Activated B cell treated with CpG ODN at 0.5 μM for 24 hours (primary cell): ENCODE measurements at regions of chr21 and their contacts with region 1.

Region 1: GRCh38 chr21:15128267-15128666 is 63.5 kb upstream of the NRIP1 start:
- DNase-seq: no peak
- ATAC-seq: peak; percentile 68
- H3K4me3 Mint-ChIP-seq: peak overlapping the region; percentile 50
- H3K27ac Mint-ChIP-seq: peak overlapping the region; percentile 48
- H3K4me1 Mint-ChIP-seq: peaks cover 20% of the 10 kb centered on the region
- H3K27me3 Mint-ChIP-seq: peaks cover under 1% of the 10 kb centered on the region
- CTCF ChIP-seq: no peak

Region 2: GRCh38 chr21:14366998-14367397 is 761.3 kb before region 1 on chr21:
- CTCF ChIA-PET with region 1: no interaction called
- POLR2A ChIA-PET with region 1: no interaction called
- intact Hi-C with region 1: no loop called
- DNase-seq: no peak
- ATAC-seq: no peak
- H3K4me3 Mint-ChIP-seq: no peak overlapping the region
- H3K27ac Mint-ChIP-seq: no peak overlapping the region
- H3K4me1 Mint-ChIP-seq: no peaks in the 10 kb centered on the region
- H3K27me3 Mint-ChIP-seq: peaks cover 6% of the 10 kb centered on the region
- CTCF ChIP-seq: no peak

Region 3: GRCh38 chr21:14403681-14404318 is 724.5 kb before region 1 on chr21:
- CTCF ChIA-PET with region 1: no interaction called
- POLR2A ChIA-PET with region 1: no interaction called
- intact Hi-C with region 1: loop called (anchors 1 kb)
- DNase-seq: no peak
- ATAC-seq: peak; percentile 57
- H3K4me3 Mint-ChIP-seq: no peak overlapping the region
- H3K27ac Mint-ChIP-seq: no peak overlapping the region
- H3K4me1 Mint-ChIP-seq: no peaks in the 10 kb centered on the region
- H3K27me3 Mint-ChIP-seq: no peaks in the 10 kb centered on the region
- CTCF ChIP-seq: peak; percentile 77

Region 4: DNA sequence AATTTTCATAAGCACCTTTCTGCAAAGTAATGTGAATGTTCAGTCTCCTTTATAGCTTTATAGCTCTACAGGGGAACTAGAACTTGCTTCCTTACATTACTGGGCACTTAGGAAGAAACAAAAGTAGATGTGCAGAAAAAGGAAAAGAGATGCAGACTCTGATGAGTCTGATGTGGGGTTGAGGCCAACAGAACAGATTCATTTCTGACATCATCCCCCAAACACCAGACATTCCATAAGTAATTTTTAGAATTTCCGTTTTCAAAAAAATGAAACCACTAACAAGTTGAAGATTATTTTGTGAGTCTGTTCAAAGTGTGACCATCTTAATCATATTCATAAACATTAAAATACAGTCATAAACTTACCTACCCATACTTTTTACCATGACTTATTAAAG is 159.4 kb before region 1 on chr21:
- CTCF ChIA-PET with region 1: no interaction called
- POLR2A ChIA-PET with region 1: no interaction called
- intact Hi-C with region 1: no loop called
- DNase-seq: no peak
- ATAC-seq: no peak
- H3K4me3 Mint-ChIP-seq: no peak overlapping the region
- H3K27ac Mint-ChIP-seq: no peak overlapping the region
- H3K4me1 Mint-ChIP-seq: no peaks in the 10 kb centered on the region
- H3K27me3 Mint-ChIP-seq: no peaks in the 10 kb centered on the region
- CTCF ChIP-seq: no peak

Region 5: DNA sequence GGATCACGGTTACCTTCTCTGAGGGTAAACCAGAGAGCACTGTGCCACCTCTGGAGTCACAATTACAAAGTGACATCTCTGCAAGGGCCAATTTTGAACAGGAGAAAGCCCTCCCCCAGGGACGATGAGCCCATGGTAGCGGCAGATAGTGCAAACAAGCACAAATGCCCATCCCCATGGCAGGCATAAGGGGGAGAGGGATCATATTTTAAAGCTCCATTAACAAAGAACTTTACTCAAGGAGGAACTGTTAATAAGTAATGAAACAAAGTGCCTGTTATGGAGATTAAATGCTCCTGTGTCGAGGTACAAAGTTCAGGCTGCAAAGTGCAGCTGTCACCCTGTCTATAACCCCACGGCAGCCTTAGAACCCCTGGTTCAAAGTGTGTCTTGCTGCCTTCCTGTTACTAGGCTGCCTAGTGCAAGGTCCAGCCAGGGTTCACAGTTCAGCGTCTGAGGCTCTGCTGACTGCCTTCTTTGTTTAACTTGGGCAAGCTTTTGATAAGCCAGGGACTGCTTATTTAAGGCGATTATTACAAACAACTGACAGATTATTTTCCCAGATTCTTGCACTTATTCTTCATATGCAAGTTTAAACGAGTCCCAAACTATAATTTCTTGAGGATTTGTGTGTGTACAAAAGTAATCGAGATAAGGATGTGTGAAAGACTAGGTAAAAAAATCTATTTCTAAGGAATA is 12.2 kb after region 1 on chr21:
- CTCF ChIA-PET with region 1: no interaction called
- POLR2A ChIA-PET with region 1: no interaction called
- intact Hi-C with region 1: no loop called
- DNase-seq: no peak
- ATAC-seq: no peak
- H3K4me3 Mint-ChIP-seq: no peak overlapping the region
- H3K27ac Mint-ChIP-seq: no peak overlapping the region
- H3K4me1 Mint-ChIP-seq: no peaks in the 10 kb centered on the region
- H3K27me3 Mint-ChIP-seq: peaks cover 24% of the 10 kb centered on the region
- CTCF ChIP-seq: no peak

Region 6: GRCh38 chr21:15159382-15160020 is 31.2 kb after region 1 on chr21:
- CTCF ChIA-PET with region 1: no interaction called
- POLR2A ChIA-PET with region 1: interaction called, 3 read pairs
- intact Hi-C with region 1: loop called (anchors 1 kb)
- DNase-seq: no peak
- ATAC-seq: peak; percentile 90
- H3K4me3 Mint-ChIP-seq: peak overlapping the region; percentile 33
- H3K27ac Mint-ChIP-seq: peak overlapping the region; percentile 63
- H3K4me1 Mint-ChIP-seq: peaks cover 23% of the 10 kb centered on the region
- H3K27me3 Mint-ChIP-seq: peaks cover 3% of the 10 kb centered on the region
- CTCF ChIP-seq: no peak

Region 7: DNA sequence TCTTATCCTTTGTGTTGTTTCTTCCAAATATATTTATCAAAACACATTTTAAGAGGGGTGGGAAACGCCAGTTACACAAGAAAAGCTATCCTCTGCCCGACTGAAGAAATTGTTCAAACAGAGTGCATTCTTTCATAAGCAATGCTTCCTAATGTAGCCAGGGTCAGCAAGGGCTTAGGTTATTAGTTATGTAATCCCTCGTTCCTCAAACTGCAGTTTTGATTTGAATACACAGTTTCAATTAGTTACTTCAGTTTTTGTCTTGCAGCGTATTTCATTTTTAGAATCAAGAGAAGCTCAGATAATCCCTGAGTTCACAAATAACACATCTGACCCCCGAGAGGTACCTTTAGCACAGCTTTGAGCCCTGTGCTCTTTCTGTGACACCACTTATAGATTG is 78.2 kb after region 1 on chr21:
- CTCF ChIA-PET with region 1: no interaction called
- POLR2A ChIA-PET with region 1: no interaction called
- intact Hi-C with region 1: loop called (anchors 2 kb)
- DNase-seq: no peak
- ATAC-seq: peak; percentile 76
- H3K4me3 Mint-ChIP-seq: peak overlapping the region; percentile 24
- H3K27ac Mint-ChIP-seq: peak overlapping the region; percentile 3
- H3K4me1 Mint-ChIP-seq: peaks cover 22% of the 10 kb centered on the region
- H3K27me3 Mint-ChIP-seq: peaks cover 37% of the 10 kb centered on the region
- CTCF ChIP-seq: no peak